ENCODE measurements at regions of chr2 and their contacts with region 1.

Region 1: DNA sequence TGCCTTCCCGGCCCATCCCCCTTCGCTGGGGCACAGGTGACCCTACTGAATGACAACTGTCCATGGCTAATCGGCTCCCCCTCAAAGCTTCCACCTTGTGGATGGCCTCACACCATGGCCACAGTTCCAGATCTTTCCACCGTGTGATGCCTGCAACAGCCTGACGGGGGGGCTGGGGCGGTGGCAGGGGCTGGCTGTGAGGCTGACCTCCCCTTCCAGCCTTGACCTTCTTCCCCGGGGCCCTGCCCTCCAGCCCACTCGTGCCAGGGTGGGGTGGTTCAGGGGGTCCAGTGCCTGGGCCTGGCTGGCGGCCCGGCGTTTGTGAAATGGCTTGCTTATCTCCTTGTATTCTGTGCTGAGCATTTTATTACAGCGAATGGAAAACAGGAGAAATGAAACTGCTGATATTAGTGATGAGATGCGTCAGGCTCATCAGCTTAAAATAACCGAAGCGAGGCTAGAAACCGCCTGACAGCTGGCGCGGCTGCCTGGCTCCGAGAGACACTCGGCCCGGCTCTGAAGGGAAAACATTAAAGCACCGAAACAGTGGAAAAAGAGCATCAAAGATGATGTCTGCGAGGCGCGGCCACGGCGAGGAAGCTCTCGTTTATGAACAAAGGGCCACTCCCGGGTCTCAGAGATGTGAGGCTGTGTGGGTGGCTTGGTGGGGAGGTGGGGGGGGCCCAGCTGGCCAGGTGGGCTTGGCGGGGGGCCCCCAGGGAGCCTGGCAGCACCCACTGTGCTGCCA is 916 bp upstream of the PDCD1 start:
- DNase-seq: no peak
- ATAC-seq: peak; percentile 32
- H3K4me3 Mint-ChIP-seq: peak overlapping the region; percentile 83
- H3K27ac Mint-ChIP-seq: peak overlapping the region; percentile 92
- H3K4me1 Mint-ChIP-seq: peaks cover 35% of the 10 kb centered on the region
- H3K27me3 Mint-ChIP-seq: peaks cover 15% of the 10 kb centered on the region

Region 2: DNA sequence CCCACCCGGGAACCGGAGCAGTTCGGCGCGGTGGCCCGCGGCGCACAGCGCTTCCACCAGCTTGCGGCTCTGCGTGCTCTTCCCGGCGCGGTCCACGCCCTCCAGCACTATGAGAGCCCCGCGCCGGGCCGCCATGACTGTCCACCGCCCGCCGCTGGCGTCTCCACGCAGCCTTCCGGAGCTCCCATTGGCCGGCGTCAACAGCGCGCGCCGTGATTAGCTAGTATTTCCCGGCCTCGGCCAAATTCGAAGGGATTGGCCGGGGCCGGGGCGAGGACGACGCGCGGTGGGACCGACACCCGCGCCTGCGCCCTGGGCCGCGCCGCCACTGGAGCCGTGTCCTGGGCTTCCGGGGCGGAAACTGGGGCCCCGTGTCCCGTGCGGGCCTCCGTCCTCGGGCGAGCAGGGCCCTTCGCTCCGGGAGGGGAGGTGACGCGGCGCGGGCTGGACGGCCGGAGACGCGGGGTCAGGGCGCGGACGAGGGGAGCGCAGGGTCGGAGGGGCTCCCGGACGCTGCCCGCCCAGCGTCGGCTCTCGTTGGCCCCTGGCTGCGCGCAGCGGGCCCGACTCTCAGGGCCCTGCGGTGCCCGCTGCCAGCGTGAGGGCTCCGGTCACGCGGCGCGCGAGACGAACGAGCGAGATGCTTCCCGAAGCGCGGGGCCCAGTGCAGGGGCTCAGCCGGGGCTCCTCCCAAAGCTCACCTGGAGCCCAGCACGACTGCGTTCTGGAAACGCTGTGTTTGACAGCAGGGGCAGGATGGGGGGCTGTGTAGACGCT is 172.8 kb before region 1 on chr2 and contains the start of gene DTYMK:
- POLR2A ChIA-PET with region 1: interaction called, 10 read pairs
- DNase-seq: peak; percentile 99
- ATAC-seq: peak; percentile 97
- H3K4me3 Mint-ChIP-seq: peak within 1 kb of the TSS; percentile 89
- H3K27ac Mint-ChIP-seq: peak within 1 kb of the TSS; percentile 96
- H3K4me1 Mint-ChIP-seq: peaks cover 22% of the 10 kb centered on the region
- H3K27me3 Mint-ChIP-seq: no peaks in the 10 kb centered on the region
- total RNA-seq, gene DTYMK: 56.5 to 67.9 TPM

Region 3: GRCh38 chr2:241833101-241833663 is 26.4 kb before region 1 on chr2:
- POLR2A ChIA-PET with region 1: no interaction called
- DNase-seq: no peak
- ATAC-seq: no peak
- H3K4me3 Mint-ChIP-seq: no peak overlapping the region
- H3K27ac Mint-ChIP-seq: no peak overlapping the region
- H3K4me1 Mint-ChIP-seq: peaks cover 8% of the 10 kb centered on the region
- H3K27me3 Mint-ChIP-seq: peaks cover 51% of the 10 kb centered on the region

Region 4: DNA sequence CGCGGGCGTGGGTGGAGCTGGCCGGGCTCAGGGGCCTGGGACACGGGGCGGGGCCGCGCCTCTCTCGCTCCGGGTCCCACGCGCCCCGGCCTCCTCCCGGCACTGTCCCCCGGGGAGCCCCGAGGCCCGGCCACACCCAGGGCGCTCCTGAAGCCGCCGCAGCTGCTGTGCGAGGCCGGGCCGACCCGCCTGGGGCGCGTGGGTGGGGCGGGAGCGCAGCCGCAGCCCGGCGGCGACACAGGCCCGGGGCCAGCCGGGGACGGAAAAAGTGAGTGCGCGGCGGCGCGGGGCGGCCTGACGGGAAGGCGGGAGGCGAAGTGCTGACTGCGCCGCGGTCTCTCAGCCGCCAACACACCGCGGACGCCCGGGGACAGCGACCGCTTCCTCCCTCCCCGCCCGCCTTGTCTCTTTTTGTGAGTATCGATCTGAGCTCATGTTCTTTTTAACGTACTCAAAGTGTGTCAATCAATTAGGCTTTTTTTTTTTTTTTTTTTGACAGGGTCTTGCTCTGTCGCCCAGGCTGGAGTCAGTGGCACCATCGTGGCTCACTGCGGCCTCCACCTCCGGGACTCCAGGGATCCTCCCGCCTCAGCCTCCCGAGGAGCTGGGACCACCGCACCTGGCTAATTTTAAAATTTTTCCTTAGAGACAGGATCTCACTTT is 15.4 kb before region 1 on chr2:
- POLR2A ChIA-PET with region 1: interaction called, 14 read pairs
- DNase-seq: peak; percentile 84
- ATAC-seq: peak; percentile 83
- H3K4me3 Mint-ChIP-seq: peak overlapping the region; percentile 78
- H3K27ac Mint-ChIP-seq: peak overlapping the region; percentile 77
- H3K4me1 Mint-ChIP-seq: peaks cover 19% of the 10 kb centered on the region
- H3K27me3 Mint-ChIP-seq: peaks cover 16% of the 10 kb centered on the region